RWPE1 (cell line): ENCODE measurements at regions of chr3 and their contacts with region 1.

Region 1: DNA sequence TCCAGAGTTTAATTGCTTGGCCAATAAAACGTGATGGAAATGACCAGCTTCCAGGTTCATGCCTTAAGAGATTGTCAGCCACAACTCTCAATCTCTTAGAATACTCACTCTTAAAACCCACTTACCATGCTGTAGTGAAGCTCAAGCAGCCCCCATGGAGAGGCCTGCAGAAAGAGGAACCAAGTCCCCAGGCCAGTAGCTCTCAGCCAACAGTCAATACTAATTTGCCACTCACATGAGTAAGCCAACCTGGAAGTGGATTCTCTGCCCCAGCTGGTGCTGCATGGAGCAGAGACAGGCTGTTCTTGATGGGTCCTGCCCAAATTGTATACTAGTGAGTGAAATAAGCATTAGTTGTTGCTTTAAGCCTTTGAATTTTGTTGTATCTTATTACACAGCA is 155.9 kb downstream of the OXSM start:
- DNase-seq: no peak
- H3K27ac ChIP-seq: no peak overlapping the region
- CTCF ChIP-seq: no peak

Region 2: GRCh38 chr3:25973122-25973521 is 27.3 kb after region 1 on chr3:
- CTCF ChIA-PET with region 1: interaction called, 11 read pairs
- POLR2A ChIA-PET with region 1: no interaction called
- DNase-seq: no peak
- H3K27ac ChIP-seq: no peak overlapping the region
- CTCF ChIP-seq: no peak

Region 3: DNA sequence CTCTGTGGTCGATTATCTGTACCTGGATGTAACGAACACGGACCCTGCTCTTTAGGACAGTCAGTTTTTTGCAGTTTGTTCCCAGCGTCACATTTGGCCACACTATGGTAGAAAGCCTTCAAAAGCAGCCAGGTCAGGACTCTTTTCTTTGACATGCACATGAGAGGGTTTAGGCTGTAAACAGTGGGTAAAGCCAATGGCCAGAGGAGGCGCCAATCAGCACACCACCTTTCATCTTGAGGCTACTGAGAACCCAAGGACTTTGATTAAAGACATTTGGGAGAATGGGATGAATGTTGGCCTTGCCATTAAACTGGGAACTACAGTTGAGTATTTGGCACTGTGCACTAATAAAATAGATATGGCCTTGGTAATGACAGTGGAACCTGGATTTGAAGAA is 69.9 kb after region 1 on chr3:
- CTCF ChIA-PET with region 1: no interaction called
- POLR2A ChIA-PET with region 1: no interaction called
- DNase-seq: no peak
- H3K27ac ChIP-seq: no peak overlapping the region
- CTCF ChIP-seq: no peak